Activated CD4-positive, alpha-beta T cell treated with anti-CD3 and anti-CD28 coated beads for 36 hours (primary cell): ENCODE measurements at regions of chr11 and their contacts with region 1.

Region 1: DNA sequence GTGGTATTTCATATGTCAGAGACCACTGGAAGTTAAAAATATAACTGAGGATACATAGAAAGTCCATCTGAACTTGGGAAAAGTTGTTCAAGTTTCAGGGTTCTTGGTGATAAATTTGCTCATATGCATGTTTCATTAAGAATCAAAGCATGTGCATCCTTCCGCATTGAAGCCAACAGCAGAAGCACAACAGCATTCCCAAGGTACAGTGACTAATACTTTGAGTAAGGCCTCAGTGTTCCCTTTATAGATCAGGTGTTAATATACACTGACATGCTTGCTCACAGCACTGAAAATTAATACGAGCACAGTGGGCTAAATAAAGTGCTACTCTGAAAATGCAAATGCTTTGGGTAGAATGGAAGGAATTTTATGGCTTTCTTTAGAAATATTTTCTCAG is 691.1 kb downstream of the METTL15 start:
- DNase-seq: no peak
- ATAC-seq: no peak
- H3K4me3 Mint-ChIP-seq: no peak overlapping the region
- H3K27ac Mint-ChIP-seq: no peak overlapping the region
- H3K4me1 Mint-ChIP-seq: no peaks in the 10 kb centered on the region
- H3K27me3 Mint-ChIP-seq: no peaks in the 10 kb centered on the region

Region 2: DNA sequence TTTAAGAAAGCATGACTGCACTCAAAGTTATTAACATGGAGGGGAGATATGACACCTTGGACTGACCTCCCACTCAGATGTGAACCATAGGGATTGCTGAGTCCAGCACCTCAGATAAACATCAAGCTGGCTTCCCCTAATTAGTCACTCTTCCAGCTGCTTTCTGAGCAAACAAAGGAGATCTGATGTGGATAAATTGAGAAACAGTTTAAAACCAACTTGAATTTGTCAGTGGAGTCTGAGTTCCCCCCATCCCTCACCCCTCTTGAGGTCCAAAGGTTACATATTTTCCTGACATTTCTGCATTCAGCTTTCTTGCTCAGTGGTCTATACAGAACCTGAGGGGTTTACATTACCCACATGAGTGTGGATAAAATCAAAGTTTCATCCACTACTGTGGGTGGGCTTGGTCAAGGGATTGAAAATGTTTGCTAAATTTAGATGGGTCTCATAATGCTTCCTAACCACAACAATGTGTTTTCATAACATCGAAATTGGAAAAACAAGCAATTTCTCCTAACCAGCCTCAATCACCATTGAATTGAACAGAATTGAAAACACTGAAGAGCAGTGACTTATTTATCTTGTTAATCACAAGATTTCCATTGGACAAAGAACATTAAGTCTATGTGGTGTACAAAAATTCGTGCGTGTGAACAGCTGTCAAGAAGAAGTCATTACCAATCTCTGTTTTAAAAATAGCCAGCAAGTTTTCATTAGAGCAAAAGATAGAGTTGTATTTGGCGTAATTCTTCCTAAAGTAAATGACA is 398.8 kb before region 1 on chr11:
- CTCF ChIA-PET with region 1: no interaction called
- POLR2A ChIA-PET with region 1: no interaction called
- intact Hi-C with region 1: no loop called
- DNase-seq: no peak
- ATAC-seq: no peak
- H3K4me3 Mint-ChIP-seq: no peak overlapping the region
- H3K27ac Mint-ChIP-seq: no peak overlapping the region
- H3K4me1 Mint-ChIP-seq: no peaks in the 10 kb centered on the region
- H3K27me3 Mint-ChIP-seq: no peaks in the 10 kb centered on the region

Region 3: DNA sequence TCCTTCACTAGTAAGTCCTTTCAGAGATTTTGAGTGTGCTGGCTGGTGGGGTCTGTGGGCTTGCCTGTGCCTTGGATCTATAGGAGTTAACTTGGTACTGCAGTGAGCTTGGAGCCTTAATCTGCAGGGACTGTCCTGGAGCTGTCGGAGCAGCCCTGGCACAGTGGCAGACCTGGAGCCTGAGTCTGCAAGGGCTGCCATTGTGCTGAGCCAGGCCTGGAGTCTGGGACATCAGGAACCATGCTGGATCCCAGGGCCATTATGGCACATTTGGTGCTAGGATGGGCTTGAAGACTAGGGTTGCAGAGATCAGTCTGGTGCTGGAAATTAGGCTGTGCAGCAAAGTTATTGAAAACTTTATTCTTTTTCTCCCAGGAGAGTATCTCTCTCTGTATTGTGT is 25.7 kb before region 1 on chr11:
- CTCF ChIA-PET with region 1: no interaction called
- POLR2A ChIA-PET with region 1: interaction called, 6 read pairs
- intact Hi-C with region 1: loop called in 1 of 2 experiments (anchors 2 kb)
- DNase-seq: no peak
- ATAC-seq: no peak
- H3K4me3 Mint-ChIP-seq: no peak overlapping the region
- H3K27ac Mint-ChIP-seq: no peak overlapping the region
- H3K4me1 Mint-ChIP-seq: no peaks in the 10 kb centered on the region
- H3K27me3 Mint-ChIP-seq: no peaks in the 10 kb centered on the region

Region 4: GRCh38 chr11:28833670-28834069 is 34.4 kb after region 1 on chr11:
- CTCF ChIA-PET with region 1: no interaction called
- POLR2A ChIA-PET with region 1: no interaction called
- intact Hi-C with region 1: loop called in 1 of 2 experiments (anchors 1 kb)
- DNase-seq: no peak
- ATAC-seq: no peak
- H3K4me3 Mint-ChIP-seq: no peak overlapping the region
- H3K27ac Mint-ChIP-seq: no peak overlapping the region
- H3K4me1 Mint-ChIP-seq: no peaks in the 10 kb centered on the region
- H3K27me3 Mint-ChIP-seq: no peaks in the 10 kb centered on the region

Region 5: DNA sequence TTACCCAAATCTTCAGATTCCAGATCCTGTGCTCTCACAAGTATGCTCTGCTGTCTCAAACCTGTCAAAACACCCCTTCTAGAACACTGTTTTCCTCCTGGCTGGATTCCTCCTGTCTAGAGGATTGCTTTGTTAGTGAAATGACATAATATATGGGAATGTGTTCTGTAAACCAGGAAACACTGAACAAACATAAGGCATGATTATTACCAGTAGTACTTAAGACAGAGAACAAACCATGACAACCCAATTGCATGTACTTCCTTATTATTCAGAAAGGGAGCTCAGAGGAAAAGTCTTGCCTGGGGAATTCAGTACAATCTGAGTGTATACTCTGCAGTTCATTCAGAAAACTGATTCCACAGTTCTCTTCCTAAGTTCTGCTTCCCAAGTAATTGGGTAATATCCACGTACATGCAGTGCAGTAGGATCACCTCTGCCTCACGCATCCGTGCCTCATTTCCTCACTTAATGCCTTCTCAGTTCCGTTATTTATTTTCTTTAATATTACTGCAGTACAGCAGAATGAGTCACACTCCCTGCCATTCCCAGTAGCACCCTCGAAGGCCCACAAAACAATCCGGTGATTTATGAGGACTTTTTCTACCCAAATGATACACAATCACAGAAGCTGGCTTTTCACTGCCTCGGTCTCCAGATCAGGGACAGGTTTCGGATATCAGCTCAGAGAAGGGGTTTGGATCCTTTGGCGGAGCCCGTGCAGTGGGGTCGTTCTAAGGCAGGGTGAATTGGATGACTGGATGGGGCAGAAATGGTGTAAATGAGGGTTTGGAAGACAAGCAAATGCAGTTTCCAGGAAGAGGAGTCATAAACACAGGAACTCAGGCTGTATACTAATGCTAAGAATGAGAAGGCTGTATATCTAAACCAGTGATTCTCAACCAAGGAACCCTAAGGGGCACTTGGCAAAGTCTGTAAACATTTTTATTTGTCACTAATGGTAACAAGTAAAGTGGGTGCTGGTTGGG is 320.7 kb after region 1 on chr11:
- CTCF ChIA-PET with region 1: no interaction called
- POLR2A ChIA-PET with region 1: no interaction called
- intact Hi-C with region 1: no loop called
- DNase-seq: no peak
- ATAC-seq: no peak
- H3K4me3 Mint-ChIP-seq: no peak overlapping the region
- H3K27ac Mint-ChIP-seq: no peak overlapping the region
- H3K4me1 Mint-ChIP-seq: no peaks in the 10 kb centered on the region
- H3K27me3 Mint-ChIP-seq: no peaks in the 10 kb centered on the region

Region 6: GRCh38 chr11:29159552-29160465 is 360.5 kb after region 1 on chr11:
- CTCF ChIA-PET with region 1: no interaction called
- POLR2A ChIA-PET with region 1: no interaction called
- intact Hi-C with region 1: no loop called
- DNase-seq: peak; percentile 11
- ATAC-seq: no peak
- H3K4me3 Mint-ChIP-seq: no peak overlapping the region
- H3K27ac Mint-ChIP-seq: no peak overlapping the region
- H3K4me1 Mint-ChIP-seq: no peaks in the 10 kb centered on the region
- H3K27me3 Mint-ChIP-seq: no peaks in the 10 kb centered on the region